ENCODE measurements at regions of chr11 and their contacts with region 1.

Region 1: GRCh38 chr11:114340311-114341131 is 44.3 kb downstream of the NNMT start:
- DNase-seq: no peak
- ATAC-seq: peak; percentile 83
- H3K4me3 ChIP-seq: no peak overlapping the region
- H3K27ac ChIP-seq: no peak overlapping the region
- H3K4me1 ChIP-seq: no peaks in the 10 kb centered on the region
- H3K27me3 ChIP-seq: peaks cover 0 to 4% of the 10 kb centered on the region in 2 experiments; a peak in 2 of 4 replicates
- CTCF ChIP-seq: peak; percentile 71 to 76 (median 72)
- EP300 ChIP-seq: no peak
- POLR2A ChIP-seq: no peak
- RAD21 ChIP-seq: peak; percentile 74

Region 2: GRCh38 chr11:114197799-114198500 is 142.6 kb before region 1 on chr11:
- CTCF ChIA-PET with region 1: no interaction called
- POLR2A ChIA-PET with region 1: no interaction called
- RAD21 ChIA-PET with region 1: no interaction called
- SMC1A ChIA-PET with region 1: no interaction called
- in situ Hi-C with region 1: no loop called
- intact Hi-C with region 1: no loop called
- DNase-seq: no peak
- ATAC-seq: no peak
- H3K4me3 ChIP-seq: no peak overlapping the region
- H3K27ac ChIP-seq: no peak overlapping the region
- H3K4me1 ChIP-seq: no peaks in the 10 kb centered on the region
- H3K27me3 ChIP-seq: peaks cover 2 to 3% of the 10 kb centered on the region in 2 experiments; a peak in 2 of 4 replicates
- CTCF ChIP-seq: no peak
- EP300 ChIP-seq: no peak
- POLR2A ChIP-seq: no peak
- RAD21 ChIP-seq: no peak

Region 3: GRCh38 chr11:114606003-114606801 is 265.7 kb after region 1 on chr11:
- CTCF ChIA-PET with region 1: no interaction called
- POLR2A ChIA-PET with region 1: no interaction called
- RAD21 ChIA-PET with region 1: no interaction called
- SMC1A ChIA-PET with region 1: no interaction called
- in situ Hi-C with region 1: no loop called
- intact Hi-C with region 1: loop called (anchors 5 kb)
- DNase-seq: no peak
- ATAC-seq: peak; percentile 12; the same call in 1 of the 3 replicates
- H3K4me3 ChIP-seq: no peak overlapping the region
- H3K27ac ChIP-seq: no peak overlapping the region
- H3K4me1 ChIP-seq: no peaks in the 10 kb centered on the region
- H3K27me3 ChIP-seq: 0 out of 4 replicates have a peak, but pooled peaks cover 0 to 4% of the 10 kb centered on the region in 2 experiments
- CTCF ChIP-seq: no peak
- EP300 ChIP-seq: no peak
- POLR2A ChIP-seq: no peak
- RAD21 ChIP-seq: no peak

Measured in GM12878 (cell line).